ENCODE measurements at regions of chr1 and their contacts with region 1.

Region 1: GRCh38 chr1:25610822-25611630 is 5.6 kb upstream of the MAN1C1 start:
- DNase-seq: no peak
- H3K4me3 ChIP-seq: no peak overlapping the region
- CTCF ChIP-seq: peak; percentile 23

Region 2: GRCh38 chr1:25549273-25550154 is 61.5 kb before region 1 on chr1:
- in situ Hi-C with region 1: loop called (anchors 5 kb)
- DNase-seq: no peak
- H3K4me3 ChIP-seq: no peak overlapping the region
- CTCF ChIP-seq: no peak

Region 3: GRCh38 chr1:26336477-26337205 is 725.6 kb after region 1 on chr1:
- in situ Hi-C with region 1: no loop called
- DNase-seq: no peak
- H3K4me3 ChIP-seq: peak overlapping the region; percentile 49
- CTCF ChIP-seq: no peak